ENCODE measurements at regions of chr6 and their contacts with region 1.

Region 1: GRCh38 chr6:43075670-43076463 is at the start of gene PTK7:
- DNase-seq: no peak
- H3K4me3 ChIP-seq: peak within 1 kb of the TSS; percentile 87
- H3K27ac ChIP-seq: peak within 1 kb of the TSS; percentile 96
- H3K27me3 ChIP-seq: no peaks in the 10 kb centered on the region
- CTCF ChIP-seq: no peak
- polyA plus RNA-seq, gene PTK7: 146 and 179 TPM in 2 replicates

Region 2: DNA sequence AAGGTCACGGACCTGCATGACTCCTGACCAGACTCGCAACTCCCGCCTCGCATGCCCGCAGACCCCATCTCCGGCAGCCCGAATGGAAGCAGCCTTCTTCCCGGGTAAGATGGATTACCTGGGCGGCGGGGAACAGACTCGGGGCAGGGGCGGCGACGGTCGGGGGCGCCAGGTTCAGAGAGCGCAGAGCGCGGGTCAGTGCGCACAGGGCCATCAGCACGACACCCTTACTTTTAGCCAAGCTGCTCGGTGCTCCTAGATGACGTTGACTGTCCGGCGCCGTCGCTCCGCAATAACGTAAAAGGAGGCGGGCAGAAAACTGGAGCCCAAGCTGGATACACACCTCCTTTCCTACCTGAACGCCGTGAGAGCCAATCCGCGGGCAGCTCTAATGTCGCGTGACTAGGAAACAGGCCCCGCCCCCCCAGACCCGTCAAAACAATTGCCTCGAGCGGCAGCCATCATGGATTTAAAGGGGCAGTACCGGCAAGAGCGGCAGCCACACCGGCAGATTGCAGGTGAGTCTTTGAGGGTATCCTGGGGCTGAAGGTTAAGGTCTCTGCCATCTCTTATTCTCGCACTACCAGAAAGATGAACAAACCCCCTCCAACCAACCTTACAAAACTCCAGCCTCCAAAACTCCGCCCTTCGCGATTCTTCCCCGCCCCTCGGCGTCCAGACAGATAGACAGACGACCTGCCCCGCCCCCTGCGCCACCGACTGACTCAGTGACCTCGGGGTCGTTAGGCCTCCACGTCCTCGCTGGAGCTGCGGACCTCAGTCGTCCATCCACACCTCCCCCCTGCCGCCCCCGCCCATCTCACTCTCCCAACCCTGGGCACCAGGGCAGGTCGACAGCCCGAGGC is 16.5 kb before region 1 on chr6 and contains the starts of genes KLC4 and MRPL2:
- CTCF ChIA-PET with region 1: no interaction called
- POLR2A ChIA-PET with region 1: interaction called, 21 read pairs
- DNase-seq: peak; percentile 93
- H3K4me3 ChIP-seq: peak within 1 kb of the TSS; percentile 100
- H3K27ac ChIP-seq: peak within 1 kb of the TSS; percentile 65
- H3K27me3 ChIP-seq: no peaks in the 10 kb centered on the region
- CTCF ChIP-seq: no peak
- polyA plus RNA-seq, gene KLC4: 9.1 and 10.2 TPM in 2 replicates
- polyA plus RNA-seq, gene MRPL2: 19.3 and 19.4 TPM in 2 replicates

Region 3: DNA sequence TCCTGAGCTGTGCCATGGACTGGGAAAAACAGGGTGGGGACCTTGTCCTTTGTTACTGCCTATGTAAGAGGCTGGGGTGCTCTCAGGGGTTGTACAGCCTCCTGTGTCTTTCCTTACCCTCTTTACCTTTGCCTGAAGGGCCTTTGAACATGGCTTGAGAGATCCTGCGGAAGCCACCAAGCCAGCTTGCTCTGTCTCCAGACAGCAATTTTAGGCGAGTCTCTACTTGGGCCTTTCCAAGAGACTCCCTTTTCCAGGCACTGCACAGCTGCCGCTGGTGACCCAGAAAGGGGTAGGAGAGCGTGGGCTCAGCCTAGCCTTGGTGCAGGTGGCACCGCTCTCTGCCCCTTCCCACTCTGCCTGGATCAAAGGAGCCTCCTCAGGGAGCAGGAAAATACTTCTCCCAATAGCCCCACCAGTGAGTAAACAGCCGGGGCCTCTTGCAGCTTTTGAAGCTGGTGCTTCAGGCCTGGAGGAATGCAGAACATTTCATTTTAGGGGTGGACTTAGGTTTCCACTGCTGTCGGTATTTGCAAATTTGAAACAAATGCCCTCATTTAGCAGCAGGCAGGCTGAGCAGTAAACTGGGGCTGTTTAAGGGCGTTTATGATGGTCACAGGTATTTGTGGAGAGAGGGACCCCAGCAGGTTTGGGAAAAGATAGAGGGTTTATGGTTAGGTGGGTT is 14.1 kb after region 1 on chr6:
- CTCF ChIA-PET with region 1: interaction called, 5 read pairs
- POLR2A ChIA-PET with region 1: interaction called, 18 read pairs
- DNase-seq: no peak
- H3K4me3 ChIP-seq: no peak overlapping the region
- H3K27ac ChIP-seq: peak overlapping the region; percentile 49
- H3K27me3 ChIP-seq: no peaks in the 10 kb centered on the region
- CTCF ChIP-seq: no peak

Region 4: DNA sequence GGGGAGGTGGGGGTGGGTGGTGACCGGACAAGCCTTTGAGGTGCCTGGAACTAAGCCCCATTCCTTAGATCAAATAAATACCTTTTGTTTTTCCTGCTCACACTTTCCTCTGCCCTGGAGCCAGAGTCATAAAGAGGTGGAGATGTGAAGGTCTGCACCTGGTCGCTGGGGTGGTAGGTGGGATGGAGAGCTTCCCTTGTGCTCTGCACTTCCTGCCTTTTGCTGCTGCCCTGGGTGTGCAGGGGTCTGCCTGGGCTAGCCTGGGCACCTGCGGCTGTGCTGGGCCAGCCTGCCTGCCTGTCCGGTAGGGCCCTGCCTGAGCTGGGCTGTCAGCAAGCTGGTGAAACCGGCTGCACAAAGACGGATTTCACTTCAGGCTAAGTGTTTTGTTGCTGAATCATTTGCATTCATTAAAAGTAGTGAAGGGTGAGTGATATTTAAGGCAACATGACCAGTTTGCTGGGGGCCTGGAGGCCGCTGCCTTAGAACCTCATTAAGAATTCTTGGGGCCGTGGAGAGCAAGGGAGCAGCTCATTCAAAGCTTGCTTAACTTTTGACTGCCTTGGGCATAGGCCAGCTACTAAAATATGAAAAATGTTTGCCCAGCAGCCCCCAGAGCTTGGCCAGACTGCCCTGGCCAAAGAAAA is 20.7 kb after region 1 on chr6:
- CTCF ChIA-PET with region 1: interaction called, 7 read pairs
- POLR2A ChIA-PET with region 1: interaction called, 21 read pairs
- DNase-seq: no peak
- H3K4me3 ChIP-seq: peak overlapping the region; percentile 31; the same call in 1 of the 2 replicates
- H3K27ac ChIP-seq: peak overlapping the region; percentile 88
- H3K27me3 ChIP-seq: no peaks in the 10 kb centered on the region
- CTCF ChIP-seq: no peak

Region 5: DNA sequence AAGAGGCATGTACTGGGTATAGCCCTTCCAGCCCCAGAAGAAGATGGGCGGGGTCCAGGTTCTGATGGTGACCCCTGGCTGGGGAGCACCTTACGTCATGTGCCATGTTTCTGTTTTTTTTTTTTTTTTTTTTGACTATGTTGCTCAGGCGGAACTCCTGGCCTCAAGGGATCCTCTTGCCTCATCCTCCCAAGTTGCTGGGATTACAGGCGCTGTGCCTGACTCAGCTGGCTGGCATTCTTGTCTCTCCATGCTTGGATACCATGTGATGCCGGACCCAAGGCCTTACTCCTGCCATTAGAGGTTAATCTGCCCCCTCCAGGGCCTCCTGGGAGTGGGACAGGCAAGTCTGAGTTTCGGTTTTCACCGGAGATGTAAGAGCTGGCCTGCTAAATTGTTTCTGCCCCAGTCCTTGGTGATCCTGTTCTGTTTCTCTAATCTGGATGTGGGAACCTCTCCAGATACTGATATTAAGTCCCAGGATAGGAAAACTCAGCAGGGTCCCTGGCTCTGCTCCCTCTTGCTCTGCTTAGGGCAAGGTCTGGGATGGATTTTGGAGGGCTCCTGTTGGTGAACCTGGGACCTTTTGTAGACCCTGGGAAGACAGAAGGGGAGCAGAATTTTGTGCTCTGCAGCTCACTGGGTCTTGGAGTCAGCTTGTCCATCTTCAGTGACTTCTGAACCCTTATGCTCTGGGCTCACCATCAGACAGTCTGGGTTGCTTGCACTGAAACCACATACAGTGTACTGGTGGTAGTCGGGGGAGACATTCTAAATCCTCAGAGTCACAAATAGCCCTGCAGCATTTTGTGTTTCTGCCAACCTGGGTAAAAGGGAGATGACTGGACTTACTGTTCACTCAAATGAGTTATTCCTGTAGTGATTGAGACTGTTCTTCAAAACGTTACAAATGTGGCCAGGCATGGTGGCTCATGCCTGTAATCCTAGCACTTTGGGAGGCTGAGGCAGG is 45.4 kb after region 1 on chr6:
- CTCF ChIA-PET with region 1: interaction called, 3 read pairs
- POLR2A ChIA-PET with region 1: interaction called, 19 read pairs
- DNase-seq: peak; percentile 94
- H3K4me3 ChIP-seq: peak overlapping the region; percentile 14; the same call in 1 of the 2 replicates
- H3K27ac ChIP-seq: peak overlapping the region; percentile 96
- H3K27me3 ChIP-seq: no peaks in the 10 kb centered on the region
- CTCF ChIP-seq: peak; percentile 20

Region 6: GRCh38 chr6:43143235-43144124 is 67.6 kb after region 1 on chr6:
- CTCF ChIA-PET with region 1: interaction called, 45 read pairs
- POLR2A ChIA-PET with region 1: interaction called, 8 read pairs
- DNase-seq: peak; percentile 86
- H3K4me3 ChIP-seq: no peak overlapping the region
- H3K27ac ChIP-seq: peak overlapping the region; percentile 31
- H3K27me3 ChIP-seq: no peaks in the 10 kb centered on the region
- CTCF ChIP-seq: peak; percentile 95

Measured in AG04450 (cell line).